HCT116 (cell line): ENCODE measurements at regions of chr16 and their contacts with region 1.

Region 1: GRCh38 chr16:47247690-47248089 is 103.9 kb upstream of the NETO2 start:
- DNase-seq: no peak
- ATAC-seq: no peak
- H3K4me3 ChIP-seq: no peak overlapping the region
- H3K27ac ChIP-seq: no peak overlapping the region
- H3K4me1 ChIP-seq: no peaks in the 10 kb centered on the region
- H3K27me3 ChIP-seq: no peaks in the 10 kb centered on the region
- CTCF ChIP-seq: no peak
- POLR2A ChIP-seq: no peak
- RAD21 ChIP-seq: no peak

Region 2: DNA sequence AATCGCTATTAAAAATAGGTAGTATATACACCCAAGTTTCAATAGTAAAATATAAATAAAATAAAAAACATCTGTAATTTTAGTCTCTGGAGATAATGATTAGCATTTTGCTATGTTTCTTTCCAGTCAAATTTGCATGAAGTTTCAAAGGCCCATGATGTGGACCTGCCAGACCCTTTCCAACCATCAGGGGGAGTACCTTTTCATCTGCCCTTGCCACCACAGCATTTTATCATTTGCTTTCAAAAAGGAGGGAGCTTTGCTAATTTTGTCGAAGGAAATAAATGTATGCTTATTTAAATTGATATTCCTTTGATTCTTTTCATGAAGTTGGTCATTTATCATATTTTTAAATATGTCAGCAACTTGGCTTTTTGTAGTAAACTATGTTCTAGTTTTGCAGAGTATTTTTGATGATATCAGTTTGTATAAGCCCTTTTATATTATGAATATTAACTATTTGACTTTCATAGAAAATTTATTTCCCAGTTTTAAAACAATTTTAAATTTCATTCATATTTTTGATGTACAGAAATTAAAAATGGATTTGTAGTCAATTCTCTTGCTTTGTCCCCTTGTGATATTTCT is 11.3 kb after region 1 on chr16:
- CTCF ChIA-PET with region 1: interaction called, 19 read pairs
- POLR2A ChIA-PET with region 1: interaction called, 3 read pairs
- RAD21 ChIA-PET with region 1: no interaction called
- intact Hi-C with region 1: no loop called
- DNase-seq: peak; percentile 18
- ATAC-seq: peak; percentile 72
- H3K4me3 ChIP-seq: no peak overlapping the region
- H3K27ac ChIP-seq: no peak overlapping the region
- H3K4me1 ChIP-seq: no peaks in the 10 kb centered on the region
- H3K27me3 ChIP-seq: no peaks in the 10 kb centered on the region
- CTCF ChIP-seq: peak; percentile 34 to 82 (median 70); a peak in 5 of 6 replicates
- POLR2A ChIP-seq: no peak
- RAD21 ChIP-seq: peak; percentile 46

Region 3: DNA sequence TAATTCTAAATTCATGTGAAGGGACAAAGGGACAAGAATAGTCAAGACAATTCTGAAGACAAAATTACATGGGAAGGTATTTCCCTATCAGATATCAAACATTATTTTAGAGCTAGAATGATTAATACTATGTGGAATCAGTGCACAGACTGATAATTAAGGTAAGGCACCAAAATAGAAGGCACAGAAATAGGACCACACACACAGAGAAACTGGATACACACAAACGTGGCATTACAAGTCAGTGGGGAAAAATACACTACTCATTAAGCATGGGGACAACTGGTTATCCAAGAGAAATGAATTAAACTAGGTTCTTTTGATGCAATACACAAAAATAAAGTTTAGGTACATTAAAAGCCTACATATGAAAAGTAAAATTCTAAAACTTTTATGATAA is 28.8 kb after region 1 on chr16:
- CTCF ChIA-PET with region 1: no interaction called
- POLR2A ChIA-PET with region 1: no interaction called
- RAD21 ChIA-PET with region 1: no interaction called
- intact Hi-C with region 1: no loop called
- DNase-seq: no peak
- ATAC-seq: no peak
- H3K4me3 ChIP-seq: no peak overlapping the region
- H3K27ac ChIP-seq: no peak overlapping the region
- H3K4me1 ChIP-seq: no peaks in the 10 kb centered on the region
- H3K27me3 ChIP-seq: no peaks in the 10 kb centered on the region
- CTCF ChIP-seq: no peak
- POLR2A ChIP-seq: no peak
- RAD21 ChIP-seq: no peak